Heart right ventricle (tissue), 16 donors: ENCODE measurements at regions of chr15 and their contacts with region 1.

Region 1: DNA sequence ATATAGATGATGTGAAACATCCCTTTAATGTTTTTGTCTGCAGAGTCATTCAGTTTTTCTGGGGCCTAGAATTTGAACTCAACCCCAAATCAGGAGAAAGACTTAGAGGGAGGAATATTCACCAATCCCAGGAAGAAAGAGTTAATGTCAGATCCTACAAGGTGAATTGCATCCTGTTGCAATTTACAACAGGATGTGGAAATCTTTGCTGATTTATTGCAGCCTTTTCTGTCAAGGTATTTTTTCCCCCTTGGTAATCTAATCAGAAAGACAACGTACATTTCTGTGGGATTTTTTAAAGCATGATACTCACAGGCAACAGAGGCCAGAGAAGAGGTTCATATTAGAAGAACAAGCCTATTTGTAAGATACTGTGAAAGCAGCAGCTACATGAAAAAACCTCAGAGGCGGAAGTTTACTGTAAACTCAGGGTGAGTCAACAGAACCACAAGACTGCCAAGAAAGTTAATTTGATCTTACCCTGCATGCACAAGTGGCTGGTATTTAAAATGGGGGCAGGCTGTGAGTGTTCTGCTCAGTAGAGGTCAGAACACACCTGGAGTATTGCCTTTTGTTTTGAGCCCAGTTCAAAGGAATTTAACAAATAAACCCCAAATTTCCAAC is 531.9 kb downstream of the AGBL1 start:
- DNase-seq: no peak
- ATAC-seq: no peak
- H3K4me3 ChIP-seq: no peak overlapping the region
- H3K27ac ChIP-seq: no peak overlapping the region
- H3K4me1 ChIP-seq: no peaks in the 10 kb centered on the region
- H3K27me3 ChIP-seq: peaks cover 0 to 6% (median 0%) of the 10 kb centered on the region in 7 donors
- CTCF ChIP-seq: no peak

Region 2: GRCh38 chr15:86231864-86232721 is 379.4 kb before region 1 on chr15:
- intact Hi-C with region 1: loop called in 1 of 10 experiments (anchors 10 kb)
- DNase-seq: peak in 1 of 2 donors; percentile 6
- ATAC-seq: peak in 4 of 8 donors; percentile 41 to 70 (median 57)
- H3K4me3 ChIP-seq: peak overlapping the region in 2 of 10 donors; percentile 16 to 23
- H3K27ac ChIP-seq: no peak overlapping the region
- H3K4me1 ChIP-seq: peaks cover 0 to 6% (median 0%) of the 10 kb centered on the region in 9 donors
- H3K27me3 ChIP-seq: peaks cover 0 to 69% (median 40%) of the 10 kb centered on the region in 7 donors
- CTCF ChIP-seq: peak in 8 of 9 donors; percentile 37 to 69 (median 62)

Region 3: GRCh38 chr15:88258093-88258641 is 1646.6 kb after region 1 on chr15:
- intact Hi-C with region 1: loop called in 1 of 10 experiments (anchors 10 kb)
- DNase-seq: peak in 1 of 2 donors; percentile 37
- ATAC-seq: peak in 5 of 8 donors; percentile 13 to 61 (median 57)
- H3K4me3 ChIP-seq: peak overlapping the region in 8 of 10 donors; percentile 43 to 58 (median 54)
- H3K27ac ChIP-seq: peak overlapping the region in 1 of 10 donors; percentile 14
- H3K4me1 ChIP-seq: peaks cover 0 to 29% (median 14%) of the 10 kb centered on the region in 9 donors
- H3K27me3 ChIP-seq: peaks cover 4 to 72% (median 54%) of the 10 kb centered on the region in 7 donors
- CTCF ChIP-seq: peak in 6 of 9 donors; percentile 11 to 48 (median 36)